ENCODE measurements at regions of chr20 and their contacts with region 1.

Region 1: GRCh38 chr20:21125849-21126580 is at the start of gene KIZ:
- DNase-seq: peak; percentile 98
- H3K4me3 ChIP-seq: peak within 1 kb of the TSS; percentile 96 to 100 (median 98)
- H3K27ac ChIP-seq: peak within 1 kb of the TSS; percentile 83 to 97 (median 92)
- H3K4me1 ChIP-seq: peaks cover 0 to 31% (median 21%) of the 10 kb centered on the region in 4 donors
- H3K27me3 ChIP-seq: no peaks in the 10 kb centered on the region
- CTCF ChIP-seq: peak; percentile 28 to 62 (median 44)
- EP300 ChIP-seq: peak in 1 of 4 donors; percentile 49
- POLR2A ChIP-seq: peak; percentile 80 to 92
- total RNA-seq, gene KIZ: 171 to 291 (median 193) TPM

Region 2: DNA sequence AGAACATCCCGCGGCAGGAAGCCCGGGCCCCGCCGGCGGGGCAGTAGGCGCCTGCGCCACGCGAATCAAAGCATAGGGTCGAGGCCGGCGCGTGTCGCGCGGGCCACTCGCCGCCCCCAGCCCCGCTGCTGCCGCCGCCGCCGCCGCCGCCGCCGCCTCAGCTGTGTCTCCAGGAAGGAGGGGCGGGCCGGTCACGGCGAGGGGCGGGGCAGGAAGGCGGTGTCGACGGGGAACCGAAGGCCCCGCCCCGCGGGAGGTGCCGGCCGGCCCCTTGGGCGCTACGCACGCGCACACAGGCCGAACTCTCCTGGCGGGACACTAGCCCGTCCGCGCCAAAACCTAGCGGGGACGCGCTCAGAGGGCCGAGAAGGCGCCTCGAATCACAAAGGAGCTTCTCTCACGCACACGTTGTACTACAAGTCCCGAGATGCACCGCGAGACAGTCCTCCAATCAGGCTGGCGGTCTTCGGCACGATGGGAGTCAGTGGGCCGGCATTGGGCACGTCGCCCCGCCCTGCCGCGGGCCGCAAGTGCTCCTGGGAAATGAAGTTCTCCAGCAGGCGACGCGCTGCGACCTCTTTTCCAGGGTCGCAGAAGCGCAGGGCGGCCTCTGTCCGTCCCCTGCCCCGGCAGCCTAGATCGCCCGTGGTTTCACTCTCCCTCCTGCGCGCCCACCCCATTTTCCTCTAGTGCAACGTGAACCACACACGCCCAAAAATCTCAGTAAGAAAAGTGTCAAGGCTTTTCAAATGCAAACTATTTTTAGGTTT is 413.4 kb before region 1 on chr20 and contains the start of gene RALGAPA2:
- intact Hi-C with region 1: loop called (anchors 10 kb)
- DNase-seq: peak; percentile 99
- H3K4me3 ChIP-seq: peak within 1 kb of the TSS; percentile 69 to 98 (median 76)
- H3K27ac ChIP-seq: peak within 1 kb of the TSS; percentile 82 to 95 (median 87)
- H3K4me1 ChIP-seq: peaks cover 0 to 28% (median 26%) of the 10 kb centered on the region in 4 donors
- H3K27me3 ChIP-seq: no peaks in the 10 kb centered on the region
- CTCF ChIP-seq: no peak
- EP300 ChIP-seq: no peak
- POLR2A ChIP-seq: no peak
- total RNA-seq, gene RALGAPA2: 17.7 to 19.9 (median 18.8) TPM

Region 3: DNA sequence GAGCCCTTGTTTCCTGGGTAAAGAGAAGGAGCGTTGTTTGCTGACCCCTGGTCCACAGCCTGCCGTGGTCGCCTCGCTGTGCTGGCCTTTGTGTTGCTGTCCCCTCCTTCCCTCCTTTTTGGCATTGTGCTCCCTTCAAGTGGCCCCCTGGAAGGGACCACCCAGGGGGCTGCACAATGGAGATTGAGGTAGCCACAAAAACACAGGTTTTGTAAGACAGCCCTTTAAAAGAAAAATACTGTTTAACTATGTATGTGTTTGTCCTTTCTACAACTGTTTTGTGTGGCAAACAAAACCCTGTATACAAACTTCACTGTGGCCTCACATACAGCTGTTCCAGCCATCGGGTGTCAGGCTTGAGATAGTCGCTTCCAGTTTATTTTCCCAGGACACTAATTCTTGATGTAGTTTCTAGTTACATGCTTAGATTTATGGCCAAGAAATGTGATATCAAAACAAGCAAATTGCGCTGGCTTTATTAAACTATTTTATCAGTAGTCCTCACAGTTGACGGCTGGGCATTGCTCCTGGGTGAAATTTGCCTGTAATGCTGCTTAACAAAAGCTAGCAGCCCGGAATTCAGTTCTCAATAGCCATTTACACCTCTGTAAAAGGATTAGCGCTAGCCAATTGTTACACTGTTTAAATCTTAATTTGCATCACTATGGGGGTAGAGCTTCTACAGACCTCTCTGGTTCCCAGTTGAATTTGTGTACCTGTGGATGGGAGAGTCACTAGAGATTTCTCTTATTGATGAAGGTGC is 63.9 kb after region 1 on chr20:
- intact Hi-C with region 1: loop called (anchors 5 kb)
- DNase-seq: no peak
- H3K4me3 ChIP-seq: no peak overlapping the region
- H3K27ac ChIP-seq: peak overlapping the region in 3 of 4 donors; percentile 64 to 72 (median 70)
- H3K4me1 ChIP-seq: peaks cover 0 to 24% (median 20%) of the 10 kb centered on the region in 4 donors
- H3K27me3 ChIP-seq: no peaks in the 10 kb centered on the region
- CTCF ChIP-seq: no peak
- EP300 ChIP-seq: no peak
- POLR2A ChIP-seq: no peak

Region 4: DNA sequence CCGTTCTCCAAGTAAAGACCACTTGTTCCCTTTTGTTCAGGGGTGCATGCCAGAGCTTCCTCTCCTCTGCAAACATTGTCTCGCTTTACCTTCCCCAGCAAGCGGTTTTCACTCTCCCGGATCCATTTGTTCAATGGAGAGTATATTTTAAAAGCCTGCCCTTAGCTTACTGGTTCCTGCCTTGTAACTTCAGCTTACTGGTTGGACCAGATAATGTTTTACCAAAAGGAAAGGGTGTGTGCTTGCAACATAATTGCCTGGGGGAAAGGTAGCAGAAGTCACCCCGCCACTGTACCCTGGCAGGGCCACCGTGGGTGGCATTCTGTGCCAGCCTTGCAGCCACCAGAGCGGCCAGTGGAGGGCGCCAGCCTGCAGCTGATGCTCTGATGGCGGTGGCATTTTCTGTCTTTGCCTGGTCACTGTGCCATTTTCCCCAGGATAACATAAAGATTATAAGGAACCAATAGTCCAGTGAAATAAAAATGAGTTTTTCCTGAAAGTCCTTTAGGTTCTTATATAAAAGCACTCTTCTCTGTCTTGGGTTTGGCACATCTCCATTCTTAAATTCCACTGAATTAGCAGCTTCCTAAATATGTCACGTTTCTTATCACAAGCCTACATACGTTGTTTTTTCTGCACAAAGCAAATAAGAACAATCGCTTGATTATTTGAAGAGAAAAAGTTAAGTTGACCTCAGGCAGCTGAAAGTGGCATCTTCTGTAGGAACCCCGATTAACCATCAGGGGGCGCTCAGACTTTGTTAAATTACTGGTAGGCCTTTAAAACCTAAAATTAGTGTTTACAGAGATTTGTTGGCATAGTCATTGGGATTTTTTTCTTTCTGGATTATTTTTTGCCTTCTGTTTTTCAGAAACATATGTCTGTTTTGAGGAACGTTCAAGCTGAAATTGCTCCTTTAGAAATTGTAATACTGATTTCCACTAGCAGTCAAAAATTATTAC is 109.8 kb after region 1 on chr20:
- intact Hi-C with region 1: loop called (anchors 5 kb)
- DNase-seq: no peak
- H3K4me3 ChIP-seq: no peak overlapping the region
- H3K27ac ChIP-seq: peak overlapping the region in 2 of 4 donors; percentile 27 to 30
- H3K4me1 ChIP-seq: peaks cover 0 to 13% (median 2%) of the 10 kb centered on the region in 4 donors
- H3K27me3 ChIP-seq: no peaks in the 10 kb centered on the region
- CTCF ChIP-seq: peak; percentile 19 to 73 (median 46)
- EP300 ChIP-seq: no peak
- POLR2A ChIP-seq: no peak

Region 5: GRCh38 chr20:21901470-21902275 is 775.7 kb after region 1 on chr20:
- intact Hi-C with region 1: loop called (anchors 10 kb)
- DNase-seq: peak; percentile 96
- H3K4me3 ChIP-seq: no peak overlapping the region
- H3K27ac ChIP-seq: peak overlapping the region in 3 of 4 donors; percentile 57 to 79 (median 72)
- H3K4me1 ChIP-seq: peaks cover 0 to 42% (median 19%) of the 10 kb centered on the region in 4 donors
- H3K27me3 ChIP-seq: no peaks in the 10 kb centered on the region
- CTCF ChIP-seq: no peak
- EP300 ChIP-seq: peak; percentile 51 to 81 (median 70)
- POLR2A ChIP-seq: no peak